Left ventricle myocardium superior (tissue), 1 donor: ENCODE measurements at regions of chr18 and their contacts with region 1.

Region 1: DNA sequence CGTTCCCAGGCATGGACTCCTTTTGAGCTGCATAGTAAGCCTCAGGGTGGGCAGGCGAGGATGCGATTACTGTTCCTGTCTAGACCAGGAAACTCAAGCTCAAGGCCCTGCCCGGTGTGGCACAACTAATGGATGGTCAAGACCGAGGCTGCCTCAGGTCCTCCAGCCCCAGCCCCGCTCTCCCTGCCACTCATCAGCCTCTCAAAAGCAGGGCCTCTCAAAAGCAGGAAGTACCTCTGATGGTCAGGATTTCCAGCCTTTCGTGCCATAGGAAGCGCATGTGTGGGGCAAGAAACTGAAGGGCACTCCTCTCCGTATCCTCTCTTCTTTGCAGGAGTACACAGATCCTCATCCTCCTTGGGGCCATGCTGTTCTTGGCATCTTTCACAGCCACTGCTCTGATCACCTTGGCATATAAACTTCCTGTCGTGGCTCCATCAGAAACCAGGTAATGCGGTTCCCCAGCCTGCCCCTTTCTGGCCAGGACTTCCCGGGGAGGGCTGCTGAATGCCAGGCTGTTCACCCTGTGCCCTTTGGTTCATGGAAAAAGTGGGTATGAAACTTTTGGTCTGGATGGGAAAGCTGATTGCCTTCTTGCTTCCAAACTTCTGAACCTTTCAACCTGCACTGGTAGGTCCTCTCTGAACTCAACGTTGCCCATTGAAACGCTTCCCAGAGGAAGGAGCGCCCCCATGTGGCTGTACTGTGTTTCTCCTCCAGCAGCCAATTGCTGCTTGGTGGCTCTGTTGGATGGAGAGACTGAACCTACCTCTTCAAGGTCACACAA is 82.8 kb upstream of the SEC11C start:
- DNase-seq: peak; percentile 74
- ATAC-seq: peak; percentile 63

Region 2: GRCh38 chr18:58781627-58782194 is 275.2 kb before region 1 on chr18:
- intact Hi-C with region 1: loop called (anchors 5 kb)
- DNase-seq: peak; percentile 71
- ATAC-seq: peak; percentile 94

Region 3: GRCh38 chr18:58800582-58800981 is 256.3 kb before region 1 on chr18:
- intact Hi-C with region 1: no loop called
- DNase-seq: no peak
- ATAC-seq: no peak

Region 4: DNA sequence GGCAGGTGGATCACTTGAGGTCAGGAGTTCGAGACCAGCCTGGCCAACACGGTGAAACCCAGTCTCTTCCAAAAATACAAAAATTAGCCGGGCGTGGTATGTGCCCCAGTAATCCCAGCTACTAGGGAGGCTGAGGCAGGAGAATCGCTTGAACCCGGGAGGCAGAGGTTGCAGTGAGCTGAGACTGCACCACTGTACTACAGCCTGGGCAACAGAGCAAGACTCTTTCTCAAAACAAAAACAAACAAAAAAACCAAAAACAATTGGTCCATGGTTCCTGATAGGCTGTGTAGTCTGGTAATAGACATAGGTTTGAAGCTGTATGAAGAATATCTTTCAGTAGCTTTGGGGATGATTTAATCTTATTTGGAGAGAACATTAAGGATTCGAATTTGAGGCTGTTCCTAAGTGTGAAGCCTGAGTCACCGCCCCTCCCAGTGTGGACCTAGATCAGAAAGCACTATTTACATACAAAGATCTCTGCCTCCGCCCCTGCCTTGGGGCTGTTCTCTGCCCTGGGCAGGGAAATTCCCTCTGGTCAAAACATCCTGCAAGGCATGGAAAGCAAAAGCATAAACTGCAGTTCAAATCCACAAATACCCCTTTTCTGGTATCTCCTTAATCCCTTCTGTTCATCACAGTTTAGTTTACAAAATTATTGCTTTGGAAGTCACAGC is 790.1 kb after region 1 on chr18:
- intact Hi-C with region 1: no loop called
- DNase-seq: no peak
- ATAC-seq: no peak